ENCODE measurements at regions of chr2 and their contacts with region 1.

Region 1: DNA sequence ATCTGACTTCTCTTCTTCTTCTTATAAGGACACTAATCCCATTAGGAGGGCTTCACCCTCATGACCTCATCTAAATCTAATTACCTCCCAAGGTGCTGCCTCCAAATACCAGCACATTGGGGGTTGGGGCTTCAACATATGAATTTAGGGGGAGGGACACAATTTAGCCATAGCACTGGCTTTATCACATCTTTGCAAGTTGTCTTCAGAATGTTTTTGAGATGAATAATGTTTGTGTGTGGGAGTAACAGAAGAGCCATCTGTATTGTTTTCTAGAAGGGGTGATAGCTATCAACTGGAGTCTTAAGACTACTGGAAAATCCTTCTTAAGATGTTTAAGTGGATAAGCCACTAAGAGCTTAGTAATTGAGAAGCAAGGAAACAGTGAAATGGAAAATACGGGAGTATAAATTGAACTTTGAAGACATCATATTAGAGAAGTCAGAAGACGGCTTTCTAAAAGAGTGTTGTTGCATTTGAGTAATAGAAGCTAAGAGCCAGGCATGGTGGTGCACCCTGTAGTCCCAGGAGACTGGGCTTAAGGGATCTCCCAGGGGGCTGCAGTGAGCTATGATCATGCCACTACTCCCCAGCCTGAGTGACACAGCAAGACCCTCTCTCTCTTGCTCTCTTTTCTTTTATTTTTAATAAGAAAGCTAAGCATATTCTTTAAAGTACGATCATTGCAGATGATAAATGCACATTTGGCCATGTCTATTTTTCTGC is 32.6 kb upstream of the B3GNT2 start:
- DNase-seq: no peak

Region 2: GRCh38 chr2:62382757-62383475 is 219.6 kb after region 1 on chr2:
- intact Hi-C with region 1: loop called (anchors 2 kb)
- DNase-seq: no peak

Measured in cardiac septum (tissue), 1 donor.